OCI-LY7 (cell line): ENCODE measurements at regions of chr12 and their contacts with region 1.

Region 1: GRCh38 chr12:72168851-72169250 is 103.3 kb upstream of the TRHDE start:
- DNase-seq: no peak
- H3K4me3 ChIP-seq: no peak overlapping the region
- H3K27ac ChIP-seq: no peak overlapping the region
- H3K4me1 ChIP-seq: no peaks in the 10 kb centered on the region
- CTCF ChIP-seq: no peak

Region 2: GRCh38 chr12:72191761-72192160 is 22.9 kb after region 1 on chr12:
- CTCF ChIA-PET with region 1: interaction called, 10 read pairs
- POLR2A ChIA-PET with region 1: no interaction called
- intact Hi-C with region 1: no loop called
- DNase-seq: no peak
- H3K4me3 ChIP-seq: no peak overlapping the region
- H3K27ac ChIP-seq: no peak overlapping the region
- H3K4me1 ChIP-seq: no peaks in the 10 kb centered on the region
- CTCF ChIP-seq: no peak